A673 (cell line): ENCODE measurements at regions of chr3 and their contacts with region 1.

Region 1: DNA sequence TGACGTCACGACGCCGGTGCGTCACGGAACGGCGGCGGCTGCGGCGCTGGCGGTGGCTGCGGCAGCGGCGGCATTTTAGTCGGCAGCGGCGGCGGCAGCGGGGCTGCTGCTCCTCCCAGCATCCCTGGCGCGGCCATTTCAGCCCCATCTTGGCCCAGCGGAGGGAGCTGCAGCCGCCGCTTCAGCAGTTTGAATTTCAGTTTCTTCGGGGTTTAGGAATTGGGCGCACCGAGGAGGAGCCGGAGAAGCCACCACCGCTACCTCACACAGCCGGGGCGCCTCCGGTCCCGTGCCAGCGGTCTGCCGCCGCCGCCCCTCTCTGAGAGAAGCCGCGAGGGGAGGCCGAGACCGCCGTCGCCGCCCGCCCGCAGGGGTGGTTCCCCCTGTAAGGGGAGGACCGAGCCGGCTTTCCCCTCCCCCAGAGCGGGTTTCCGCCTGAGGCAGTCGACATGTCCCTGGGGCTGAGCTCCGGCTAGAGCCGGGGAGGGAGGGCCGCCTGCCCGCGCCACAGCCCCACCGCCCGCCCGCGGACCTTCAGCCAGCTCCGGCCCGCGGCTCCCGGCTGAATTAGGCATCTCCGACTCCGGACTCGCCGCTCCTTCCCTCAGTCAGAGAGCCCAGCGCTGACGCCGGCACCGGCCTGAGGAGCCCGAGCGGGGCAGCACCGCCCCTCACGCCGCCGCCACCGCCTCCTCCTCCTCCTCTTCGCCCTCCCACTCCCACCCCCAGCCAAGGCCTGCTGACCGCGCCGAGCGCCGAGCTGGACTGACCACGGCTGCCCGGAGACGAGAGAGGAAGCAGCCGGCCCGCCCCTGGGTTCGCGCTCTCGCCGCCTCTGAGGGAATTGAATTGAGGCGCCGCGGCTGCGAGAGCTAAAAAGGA is at the start of gene TSC22D2:
- DNase-seq: peak; percentile 96
- H3K4me3 ChIP-seq: peak within 1 kb of the TSS; percentile 84
- H3K27ac ChIP-seq: peak within 1 kb of the TSS; percentile 97
- H3K4me1 ChIP-seq: peaks cover 13% of the 10 kb centered on the region
- H3K27me3 ChIP-seq: no peaks in the 10 kb centered on the region
- CTCF ChIP-seq: peak; percentile 35; the same call in 1 of the 2 replicates
- total RNA-seq, gene TSC22D2: 28.8 and 28.9 TPM in 2 replicates

Region 2: GRCh38 chr3:150227839-150228238 is 180.6 kb before region 1 on chr3:
- CTCF ChIA-PET with region 1: no interaction called
- POLR2A ChIA-PET with region 1: no interaction called
- intact Hi-C with region 1: loop called (anchors 5 kb)
- DNase-seq: peak; percentile 86
- H3K4me3 ChIP-seq: no peak overlapping the region
- H3K27ac ChIP-seq: no peak overlapping the region
- H3K4me1 ChIP-seq: peaks cover 8% of the 10 kb centered on the region
- H3K27me3 ChIP-seq: no peaks in the 10 kb centered on the region
- CTCF ChIP-seq: peak; percentile 93

Region 3: GRCh38 chr3:150242220-150242936 is 166.1 kb before region 1 on chr3:
- CTCF ChIA-PET with region 1: no interaction called
- POLR2A ChIA-PET with region 1: no interaction called
- intact Hi-C with region 1: loop called (anchors 5 kb)
- DNase-seq: peak; percentile 47
- H3K4me3 ChIP-seq: no peak overlapping the region
- H3K27ac ChIP-seq: no peak overlapping the region
- H3K4me1 ChIP-seq: peaks cover 13% of the 10 kb centered on the region
- H3K27me3 ChIP-seq: no peaks in the 10 kb centered on the region
- CTCF ChIP-seq: no peak

Region 4: DNA sequence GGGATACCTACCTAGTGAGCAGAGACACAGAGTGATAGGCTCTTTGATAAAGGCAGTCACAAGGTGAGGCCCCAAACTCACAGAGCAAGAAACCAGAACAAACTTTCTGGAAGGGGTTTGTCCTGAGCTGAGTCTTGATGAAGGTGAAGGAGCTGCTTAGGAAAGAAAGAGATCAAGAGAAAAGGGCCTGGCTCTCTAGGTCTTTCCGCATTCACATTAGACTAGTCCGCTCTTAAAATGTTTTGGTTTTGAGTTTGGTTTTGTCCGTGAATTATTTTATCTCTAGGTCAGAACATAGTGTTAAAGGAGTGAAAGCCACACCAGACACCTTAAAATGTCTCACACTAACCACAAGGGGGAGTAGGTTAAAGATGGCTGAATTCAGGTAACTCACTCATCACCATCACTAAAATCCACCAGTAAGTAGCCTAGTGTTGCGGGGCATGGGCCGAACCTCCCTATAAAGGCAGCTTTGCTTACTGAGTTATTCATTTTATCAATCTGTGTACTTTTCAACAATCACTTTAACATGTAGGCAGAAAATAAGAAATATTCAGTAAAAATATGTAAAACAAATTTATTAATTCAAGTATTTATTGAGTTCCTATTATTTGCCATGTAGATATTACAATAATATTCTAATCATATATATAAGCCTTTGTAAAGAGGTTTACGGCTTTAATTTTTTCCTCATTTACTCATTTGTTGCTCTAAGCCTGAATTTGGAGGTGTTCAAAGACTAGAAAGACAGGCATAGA is 121.9 kb before region 1 on chr3:
- CTCF ChIA-PET with region 1: no interaction called
- POLR2A ChIA-PET with region 1: no interaction called
- intact Hi-C with region 1: loop called (anchors 5 kb)
- DNase-seq: peak; percentile 60
- H3K4me3 ChIP-seq: no peak overlapping the region
- H3K27ac ChIP-seq: no peak overlapping the region
- H3K4me1 ChIP-seq: no peaks in the 10 kb centered on the region
- H3K27me3 ChIP-seq: no peaks in the 10 kb centered on the region
- CTCF ChIP-seq: peak; percentile 64

Region 5: GRCh38 chr3:150371741-150372254 is 36.7 kb before region 1 on chr3:
- CTCF ChIA-PET with region 1: no interaction called
- POLR2A ChIA-PET with region 1: no interaction called
- intact Hi-C with region 1: loop called (anchors 1 kb)
- DNase-seq: peak; percentile 97
- H3K4me3 ChIP-seq: peak overlapping the region; percentile 32
- H3K27ac ChIP-seq: peak overlapping the region; percentile 80
- H3K4me1 ChIP-seq: peaks cover 40% of the 10 kb centered on the region
- H3K27me3 ChIP-seq: no peaks in the 10 kb centered on the region
- CTCF ChIP-seq: no peak

Region 6: GRCh38 chr3:150495563-150496168 is 87.2 kb after region 1 on chr3:
- CTCF ChIA-PET with region 1: interaction called, 13 read pairs
- POLR2A ChIA-PET with region 1: no interaction called
- intact Hi-C with region 1: loop called (anchors 1 kb)
- DNase-seq: peak; percentile 73
- H3K4me3 ChIP-seq: no peak overlapping the region
- H3K27ac ChIP-seq: no peak overlapping the region
- H3K4me1 ChIP-seq: no peaks in the 10 kb centered on the region
- H3K27me3 ChIP-seq: no peaks in the 10 kb centered on the region
- CTCF ChIP-seq: peak; percentile 75

Region 7: GRCh38 chr3:150546226-150547044 is 138.0 kb after region 1 on chr3 and contains the starts of genes EIF2A and SERP1:
- CTCF ChIA-PET with region 1: interaction called, 3 read pairs
- POLR2A ChIA-PET with region 1: no interaction called
- intact Hi-C with region 1: loop called (anchors 2 kb)
- DNase-seq: peak; percentile 99
- H3K4me3 ChIP-seq: peak within 1 kb of the TSS; percentile 74
- H3K27ac ChIP-seq: peak within 1 kb of the TSS; percentile 98
- H3K4me1 ChIP-seq: peaks cover 18% of the 10 kb centered on the region
- H3K27me3 ChIP-seq: no peaks in the 10 kb centered on the region
- CTCF ChIP-seq: no peak
- total RNA-seq, gene EIF2A: 105 and 113 TPM in 2 replicates
- total RNA-seq, gene SERP1: 86.5 and 91.7 TPM in 2 replicates